ENCODE measurements at regions of chr20 and their contacts with region 1.

Region 1: GRCh38 chr20:47501483-47502270 is at the start of gene NCOA3:
- DNase-seq: peak; percentile 71
- ATAC-seq: peak; percentile 99
- H3K4me3 ChIP-seq: peak within 1 kb of the TSS; percentile 73 to 83
- H3K27ac ChIP-seq: peak within 1 kb of the TSS; percentile 98
- H3K4me1 ChIP-seq: peaks cover 27% of the 10 kb centered on the region
- H3K27me3 ChIP-seq: no peaks in the 10 kb centered on the region
- CTCF ChIP-seq: no peak; the same call in 1 of the 2 replicates
- total RNA-seq, gene NCOA3: 47.7 TPM

Region 2: GRCh38 chr20:47272893-47273590 is 228.6 kb before region 1 on chr20:
- CTCF ChIA-PET with region 1: no interaction called
- POLR2A ChIA-PET with region 1: no interaction called
- in situ Hi-C with region 1: no loop called
- intact Hi-C with region 1: loop called (anchors 10 kb)
- DNase-seq: peak; percentile 67
- ATAC-seq: peak; percentile 68
- H3K4me3 ChIP-seq: no peak overlapping the region
- H3K27ac ChIP-seq: peak overlapping the region; percentile 97
- H3K4me1 ChIP-seq: peaks cover 48% of the 10 kb centered on the region
- H3K27me3 ChIP-seq: no peaks in the 10 kb centered on the region
- CTCF ChIP-seq: peak; percentile 86